ENCODE measurements at regions of chr1 and their contacts with region 1.

Region 1: GRCh38 chr1:68321084-68321685 is 88.9 kb upstream of the WLS start:
- DNase-seq: peak; percentile 84 to 88 (median 84)
- ATAC-seq: peak; percentile 100
- H3K4me3 ChIP-seq: no peak overlapping the region
- H3K27ac ChIP-seq: no peak overlapping the region
- H3K4me1 ChIP-seq: peaks cover 0 to 3% (median 0%) of the 10 kb centered on the region in 4 donors
- H3K27me3 ChIP-seq: no peaks in the 10 kb centered on the region
- CTCF ChIP-seq: peak; percentile 72 to 90 (median 86)
- POLR2A ChIP-seq: no peak

Region 2: GRCh38 chr1:68116643-68117235 is 204.4 kb before region 1 on chr1:
- intact Hi-C with region 1: loop called (anchors 2 to 10 kb)
- DNase-seq: peak in 1 of 3 donors; percentile 52
- ATAC-seq: peak; percentile 52 to 68 (median 66)
- H3K4me3 ChIP-seq: peak overlapping the region in 1 of 3 donors; percentile 7
- H3K27ac ChIP-seq: no peak overlapping the region
- H3K4me1 ChIP-seq: no peaks in the 10 kb centered on the region
- H3K27me3 ChIP-seq: no peaks in the 10 kb centered on the region
- CTCF ChIP-seq: peak; percentile 82 to 89 (median 82)
- POLR2A ChIP-seq: no peak

Region 3: GRCh38 chr1:68358439-68358838 is 37.3 kb after region 1 on chr1:
- intact Hi-C with region 1: no loop called
- DNase-seq: no peak
- ATAC-seq: no peak
- H3K4me3 ChIP-seq: no peak overlapping the region
- H3K27ac ChIP-seq: no peak overlapping the region
- H3K4me1 ChIP-seq: peaks cover 0 to 11% (median 1%) of the 10 kb centered on the region in 4 donors
- H3K27me3 ChIP-seq: no peaks in the 10 kb centered on the region
- CTCF ChIP-seq: no peak
- POLR2A ChIP-seq: no peak